ENCODE measurements at regions of chr6 and their contacts with region 1.

Region 1: DNA sequence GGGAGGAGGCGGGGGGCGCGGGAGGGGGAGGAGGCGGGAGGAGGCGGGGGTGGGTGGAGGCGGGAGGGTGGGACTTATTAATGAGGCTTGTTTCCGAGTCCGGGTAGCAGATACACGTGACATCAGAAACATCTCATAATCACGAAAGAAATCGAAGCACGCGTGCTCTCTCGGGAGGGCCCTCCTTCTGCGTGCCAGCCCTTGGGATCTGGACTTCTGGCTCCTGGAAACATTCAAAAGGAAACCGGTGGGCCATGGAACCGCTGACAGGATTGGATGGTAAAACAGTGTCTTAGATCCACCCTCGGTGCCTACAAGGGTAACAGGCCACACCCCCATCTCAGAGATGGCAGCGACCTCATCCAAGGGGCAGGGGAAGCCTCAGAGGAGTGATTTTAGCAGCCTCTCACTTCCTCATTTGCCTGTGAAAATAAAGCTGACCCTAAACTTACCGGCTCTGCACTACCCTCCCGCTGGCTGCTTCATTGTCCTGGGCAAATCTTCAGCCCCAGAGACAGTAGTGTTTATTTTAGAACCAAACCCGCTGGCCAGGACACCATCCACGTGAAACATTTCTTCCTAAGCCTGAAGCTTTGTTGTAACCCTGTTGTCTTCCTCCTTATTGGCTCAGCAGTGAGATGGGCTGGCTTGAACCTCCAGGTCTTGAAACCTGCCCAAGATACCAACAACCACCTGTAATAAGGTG is 97.5 kb downstream of the PSMG4 start:
- DNase-seq: peak; percentile 35 to 90 (median 66)
- ATAC-seq: peak; percentile 87
- H3K4me3 ChIP-seq: peak overlapping the region; percentile 51 to 58
- H3K4me3 Mint-ChIP-seq: peak overlapping the region; percentile 81
- H3K27ac ChIP-seq: peak overlapping the region; percentile 48 to 79
- H3K27ac Mint-ChIP-seq: peak overlapping the region; percentile 90
- H3K4me1 ChIP-seq: peaks cover 27% of the 10 kb centered on the region
- H3K4me1 Mint-ChIP-seq: peaks cover 33% of the 10 kb centered on the region
- H3K27me3 ChIP-seq: no peaks in the 10 kb centered on the region
- H3K27me3 Mint-ChIP-seq: no peaks in the 10 kb centered on the region
- CTCF ChIP-seq: no peak

Region 2: DNA sequence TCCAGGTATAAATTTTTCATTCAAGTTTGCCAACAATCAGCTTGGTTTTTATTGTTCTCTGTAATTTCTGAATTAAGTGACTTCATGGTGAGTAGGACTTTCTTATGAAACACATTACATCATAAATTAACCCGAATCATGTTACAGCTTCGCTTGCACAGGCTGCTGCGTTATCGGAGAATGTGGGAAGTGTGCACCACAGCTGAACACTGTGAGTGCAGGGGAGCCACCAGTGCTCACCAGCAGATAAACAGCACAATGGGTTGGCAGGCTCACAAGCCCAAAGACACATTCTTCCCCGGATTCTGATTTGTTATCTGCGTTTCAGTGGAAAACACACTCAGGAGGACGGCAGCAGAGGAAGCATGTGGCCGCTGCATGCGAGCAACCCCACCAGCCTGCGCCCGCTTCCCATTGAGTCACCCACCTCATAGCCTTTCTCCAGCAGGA is 1231.9 kb before region 1 on chr6:
- CTCF ChIA-PET with region 1: no interaction called
- POLR2A ChIA-PET with region 1: no interaction called
- intact Hi-C with region 1: no loop called
- DNase-seq: no peak
- ATAC-seq: no peak
- H3K4me3 ChIP-seq: no peak overlapping the region
- H3K4me3 Mint-ChIP-seq: no peak overlapping the region
- H3K27ac ChIP-seq: no peak overlapping the region
- H3K27ac Mint-ChIP-seq: no peak overlapping the region
- H3K4me1 ChIP-seq: no peaks in the 10 kb centered on the region
- H3K4me1 Mint-ChIP-seq: peaks cover 17% of the 10 kb centered on the region
- H3K27me3 ChIP-seq: no peaks in the 10 kb centered on the region
- H3K27me3 Mint-ChIP-seq: no peaks in the 10 kb centered on the region
- CTCF ChIP-seq: no peak

Region 3: DNA sequence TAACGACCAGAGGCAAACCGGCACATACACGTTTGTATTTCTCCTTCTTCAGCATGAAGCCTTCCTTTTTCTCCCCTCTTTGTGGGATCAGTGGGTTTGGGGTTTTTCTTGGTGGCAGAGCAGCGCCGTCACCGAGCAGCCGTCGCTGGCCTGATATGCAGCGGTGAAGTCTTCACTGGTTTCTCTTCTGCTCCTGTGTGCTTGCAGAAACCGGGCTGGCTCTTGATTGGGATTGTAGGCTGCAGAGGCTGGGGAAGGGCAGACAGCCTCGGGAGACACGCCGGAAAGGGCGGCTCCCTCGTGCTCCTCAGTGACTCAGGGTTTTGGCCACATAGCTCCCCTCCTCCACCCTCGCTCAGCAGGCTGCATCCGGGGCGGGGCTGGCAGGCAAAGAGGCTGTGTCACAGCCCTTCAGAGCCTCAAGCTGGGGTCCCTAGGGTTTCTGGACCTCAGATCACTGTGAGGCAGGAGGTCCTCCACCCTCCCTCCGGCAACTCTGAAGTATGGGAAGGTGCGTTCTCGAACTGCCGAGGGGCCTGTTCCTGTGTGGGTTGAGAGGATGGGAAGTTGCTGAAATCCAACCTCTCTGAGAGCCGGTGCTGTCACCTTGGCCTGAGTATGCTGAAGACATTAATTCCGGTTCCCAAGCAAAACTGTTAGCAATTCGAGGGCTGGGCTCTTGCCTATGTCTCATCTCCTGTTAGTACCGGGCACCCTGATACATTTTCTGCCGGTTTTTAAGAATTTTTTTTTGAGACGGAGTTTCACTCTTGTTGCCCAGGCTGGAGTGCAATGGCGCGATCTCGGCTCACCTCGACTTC is 332.3 kb before region 1 on chr6:
- CTCF ChIA-PET with region 1: no interaction called
- POLR2A ChIA-PET with region 1: no interaction called
- intact Hi-C with region 1: loop called in 1 of 2 experiments (anchors 10 kb)
- DNase-seq: peak; percentile 55 to 93 (median 87)
- ATAC-seq: peak; percentile 88
- H3K4me3 ChIP-seq: peak overlapping the region; percentile 71 to 74
- H3K4me3 Mint-ChIP-seq: peak overlapping the region; percentile 88
- H3K27ac ChIP-seq: peak overlapping the region; percentile 39 to 86
- H3K27ac Mint-ChIP-seq: peak overlapping the region; percentile 86
- H3K4me1 ChIP-seq: peaks cover 40% of the 10 kb centered on the region
- H3K4me1 Mint-ChIP-seq: peaks cover 46% of the 10 kb centered on the region
- H3K27me3 ChIP-seq: no peaks in the 10 kb centered on the region
- H3K27me3 Mint-ChIP-seq: no peaks in the 10 kb centered on the region
- CTCF ChIP-seq: no peak

Region 4: DNA sequence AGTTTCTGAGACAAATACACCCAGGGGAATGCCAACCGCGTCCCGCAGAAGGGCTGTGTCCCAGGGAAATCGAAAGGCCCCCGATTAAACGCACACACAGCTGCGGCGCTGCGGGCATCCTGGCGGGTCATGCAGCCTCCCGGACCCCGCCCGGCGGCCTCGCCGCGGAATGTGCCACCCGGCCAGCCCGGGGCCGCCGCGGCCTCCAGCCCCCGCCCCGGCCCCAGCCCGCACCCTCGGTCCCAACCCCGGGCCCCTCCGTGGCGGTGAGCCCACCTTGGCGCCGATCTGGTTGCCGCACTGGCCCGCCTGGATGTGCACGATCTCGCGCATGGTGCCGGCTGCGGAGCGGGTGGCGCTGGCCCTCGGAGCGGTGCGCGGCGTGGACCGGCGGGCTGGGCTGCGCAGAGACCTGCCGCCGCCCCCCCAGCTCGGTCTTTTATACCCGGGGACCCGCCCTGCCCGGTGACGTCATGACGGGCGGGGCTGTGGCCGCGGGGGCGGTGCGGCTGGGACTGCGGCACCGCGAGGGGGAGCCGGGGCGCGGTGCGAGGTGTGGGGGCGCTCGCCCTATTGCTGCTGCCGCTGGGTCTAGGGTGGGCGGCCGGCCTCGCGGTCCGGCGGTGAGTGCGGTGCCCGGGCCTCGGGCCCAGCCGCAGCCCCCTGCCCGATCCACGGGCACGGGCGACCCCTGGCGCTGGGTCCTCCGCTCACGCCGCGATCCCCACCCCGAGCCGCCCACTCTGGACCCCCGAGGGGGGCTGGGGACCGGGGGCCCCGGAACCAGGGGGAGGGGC is 198.9 kb before region 1 on chr6 and contains the start of gene TUBB2A:
- CTCF ChIA-PET with region 1: no interaction called
- POLR2A ChIA-PET with region 1: no interaction called
- intact Hi-C with region 1: loop called in 1 of 2 experiments (anchors 10 kb)
- DNase-seq: peak; percentile 77 to 94 (median 88)
- ATAC-seq: peak; percentile 61
- H3K4me3 ChIP-seq: peak within 1 kb of the TSS; percentile 65
- H3K4me3 Mint-ChIP-seq: peak within 1 kb of the TSS; percentile 92
- H3K27ac ChIP-seq: peak within 1 kb of the TSS; percentile 73 to 84
- H3K27ac Mint-ChIP-seq: peak within 1 kb of the TSS; percentile 91
- H3K4me1 ChIP-seq: peaks cover 29% of the 10 kb centered on the region
- H3K4me1 Mint-ChIP-seq: peaks cover 36% of the 10 kb centered on the region
- H3K27me3 ChIP-seq: no peaks in the 10 kb centered on the region
- H3K27me3 Mint-ChIP-seq: peaks cover 2% of the 10 kb centered on the region
- CTCF ChIP-seq: peak; percentile 65
- total RNA-seq, gene TUBB2A: 61.4 to 63.9 TPM

Region 5: GRCh38 chr6:3337521-3338350 is 18.5 kb before region 1 on chr6:
- CTCF ChIA-PET with region 1: no interaction called
- POLR2A ChIA-PET with region 1: no interaction called
- intact Hi-C with region 1: no loop called
- DNase-seq: peak in 1 of 9 experiments; percentile 32
- ATAC-seq: no peak
- H3K4me3 ChIP-seq: no peak overlapping the region
- H3K4me3 Mint-ChIP-seq: no peak overlapping the region
- H3K27ac ChIP-seq: no peak overlapping the region
- H3K27ac Mint-ChIP-seq: no peak overlapping the region
- H3K4me1 ChIP-seq: no peaks in the 10 kb centered on the region
- H3K4me1 Mint-ChIP-seq: peaks cover 11% of the 10 kb centered on the region
- H3K27me3 ChIP-seq: no peaks in the 10 kb centered on the region
- H3K27me3 Mint-ChIP-seq: peaks cover 2% of the 10 kb centered on the region
- CTCF ChIP-seq: no peak

Region 6: GRCh38 chr6:3456755-3457466 is 100.7 kb after region 1 on chr6 and contains the start of gene SLC22A23:
- CTCF ChIA-PET with region 1: no interaction called
- POLR2A ChIA-PET with region 1: no interaction called
- intact Hi-C with region 1: loop called (anchors 2 to 10 kb)
- DNase-seq: peak; percentile 50 to 84 (median 74)
- ATAC-seq: peak; percentile 61
- H3K4me3 ChIP-seq: peak within 1 kb of the TSS; percentile 47 to 52
- H3K4me3 Mint-ChIP-seq: peak within 1 kb of the TSS; percentile 83
- H3K27ac ChIP-seq: no peak within 1 kb of the TSS
- H3K27ac Mint-ChIP-seq: peak within 1 kb of the TSS; percentile 58
- H3K4me1 ChIP-seq: peaks cover 22% of the 10 kb centered on the region
- H3K4me1 Mint-ChIP-seq: peaks cover 6% of the 10 kb centered on the region
- H3K27me3 ChIP-seq: peaks cover 0 to 24% of the 10 kb centered on the region in 2 experiments
- H3K27me3 Mint-ChIP-seq: peaks cover 14% of the 10 kb centered on the region
- CTCF ChIP-seq: peak; percentile 68
- total RNA-seq, gene SLC22A23: 3.4 to 4.8 TPM

Region 7: DNA sequence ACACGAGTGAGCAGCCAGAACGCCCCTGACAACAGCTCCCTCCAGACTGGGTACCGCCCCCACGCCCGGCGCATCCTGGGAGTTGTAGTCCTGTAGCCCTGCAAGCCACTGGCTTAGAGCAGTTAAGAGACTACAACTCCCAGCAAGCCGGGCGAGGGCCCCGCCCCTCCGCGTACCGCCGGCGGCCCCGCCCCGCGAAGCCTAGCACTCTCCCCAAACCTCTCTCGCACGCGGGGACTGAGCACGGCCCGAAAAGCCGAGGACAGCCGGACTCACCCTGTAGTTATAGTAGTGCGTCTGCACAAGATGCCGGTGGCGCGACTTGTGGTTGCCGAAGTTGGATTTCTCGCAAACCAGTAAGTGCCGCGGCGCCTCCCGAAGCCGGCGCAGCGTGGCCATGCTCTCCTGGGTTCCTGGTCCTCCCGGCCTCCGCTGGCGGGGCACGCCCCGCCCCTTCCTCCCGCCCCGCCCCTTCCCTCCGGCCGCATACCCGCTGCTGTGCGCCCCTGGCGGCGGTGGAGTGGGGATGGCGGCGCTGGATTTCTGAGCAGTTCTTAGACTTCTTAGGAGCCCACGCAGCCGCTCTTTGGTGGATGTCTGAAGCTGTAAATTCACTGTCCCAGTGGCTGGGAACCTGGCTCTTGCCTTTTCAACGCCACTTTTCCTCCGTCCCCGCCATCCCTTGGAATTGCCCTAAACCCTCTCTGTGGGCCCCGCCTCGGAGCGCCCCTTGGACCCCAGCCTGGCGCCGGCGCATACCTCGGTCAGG is 1647.6 kb after region 1 on chr6 and contains the start of gene RPP40:
- CTCF ChIA-PET with region 1: no interaction called
- POLR2A ChIA-PET with region 1: no interaction called
- intact Hi-C with region 1: loop called (anchors 5 kb)
- DNase-seq: peak; percentile 97 to 99 (median 98)
- ATAC-seq: peak; percentile 94
- H3K4me3 ChIP-seq: peak within 1 kb of the TSS; percentile 80 to 95
- H3K4me3 Mint-ChIP-seq: peak within 1 kb of the TSS; percentile 94
- H3K27ac ChIP-seq: peak within 1 kb of the TSS; percentile 79 to 82
- H3K27ac Mint-ChIP-seq: peak within 1 kb of the TSS; percentile 97
- H3K4me1 ChIP-seq: peaks cover 8% of the 10 kb centered on the region
- H3K4me1 Mint-ChIP-seq: peaks cover 13% of the 10 kb centered on the region
- H3K27me3 ChIP-seq: no peaks in the 10 kb centered on the region
- H3K27me3 Mint-ChIP-seq: no peaks in the 10 kb centered on the region
- CTCF ChIP-seq: peak; percentile 84
- total RNA-seq, gene RPP40: 0.94 to 1.2 TPM